Spleen (tissue), 13 donors: ENCODE measurements at regions of chr16 and their contacts with region 1.

Region 1: GRCh38 chr16:55465077-55465896 is 13.7 kb upstream of the MMP2 start:
- DNase-seq: peak; percentile 93
- H3K4me3 ChIP-seq: no peak overlapping the region
- H3K27ac ChIP-seq: no peak overlapping the region
- H3K4me1 ChIP-seq: peaks cover 0 to 7% (median 3%) of the 10 kb centered on the region in 6 donors
- H3K27me3 ChIP-seq: peaks cover 0 to 4% (median 0%) of the 10 kb centered on the region in 7 donors
- CTCF ChIP-seq: peak; percentile 97 to 100 (median 100)
- POLR2A ChIP-seq: no peak

Region 2: DNA sequence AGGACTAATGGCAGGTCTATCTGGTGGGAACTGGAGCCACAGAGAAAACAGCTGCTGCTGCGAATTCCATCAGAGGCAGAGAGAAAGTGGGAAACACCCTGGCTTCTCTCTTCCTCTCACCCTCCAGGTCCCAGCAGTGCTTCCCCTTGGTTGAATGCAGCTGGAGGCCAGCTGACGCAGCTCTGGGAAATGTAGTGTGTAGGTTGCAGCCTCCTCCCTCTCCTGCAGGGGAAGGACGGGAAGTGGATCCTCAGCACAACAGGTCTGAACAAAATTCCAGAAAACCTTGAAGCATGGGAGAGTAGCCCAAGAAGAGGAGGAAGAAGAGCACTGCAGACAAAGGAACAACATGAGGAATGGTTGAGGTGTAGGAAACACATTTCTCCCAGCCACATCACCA is 54.1 kb before region 1 on chr16:
- intact Hi-C with region 1: no loop called
- DNase-seq: no peak
- H3K4me3 ChIP-seq: no peak overlapping the region
- H3K27ac ChIP-seq: no peak overlapping the region
- H3K4me1 ChIP-seq: no peaks in the 10 kb centered on the region
- H3K27me3 ChIP-seq: no peaks in the 10 kb centered on the region
- CTCF ChIP-seq: no peak
- POLR2A ChIP-seq: no peak

Region 3: DNA sequence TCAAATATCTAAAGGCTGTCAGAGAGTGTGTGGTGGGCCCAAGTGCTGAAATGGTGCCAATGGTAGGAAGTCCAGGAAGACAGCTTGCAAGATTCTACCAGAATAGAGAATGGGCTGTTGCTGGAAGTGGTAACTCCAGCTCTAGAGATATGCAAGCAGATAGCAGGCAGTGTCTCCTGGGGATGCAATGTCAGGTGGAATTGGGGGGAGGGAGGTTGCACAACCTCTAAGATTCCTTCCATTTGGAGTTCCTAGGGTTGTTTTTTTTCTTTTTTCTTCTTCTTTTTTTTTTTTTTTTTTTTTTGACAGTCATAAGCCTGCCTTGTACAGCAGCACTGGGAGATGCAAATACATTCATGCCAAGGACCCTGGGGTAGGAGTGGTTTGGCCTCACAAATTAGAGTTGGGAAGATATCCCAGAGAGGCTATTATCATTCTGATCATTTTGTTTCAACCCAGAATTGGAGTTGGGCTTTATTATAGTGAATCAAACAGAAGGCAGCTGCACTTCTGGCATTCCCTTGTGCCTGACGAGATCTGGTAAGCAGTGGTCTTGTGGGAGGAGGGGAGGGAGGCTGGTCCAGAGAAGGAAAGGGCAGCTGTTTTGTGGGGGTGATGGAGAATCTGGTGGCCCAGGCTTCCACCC is 241.6 kb after region 1 on chr16:
- intact Hi-C with region 1: loop called (anchors 5 kb)
- DNase-seq: no peak
- H3K4me3 ChIP-seq: no peak overlapping the region
- H3K27ac ChIP-seq: no peak overlapping the region
- H3K4me1 ChIP-seq: no peaks in the 10 kb centered on the region
- H3K27me3 ChIP-seq: peaks cover 0 to 51% (median 3%) of the 10 kb centered on the region in 7 donors
- CTCF ChIP-seq: no peak
- POLR2A ChIP-seq: no peak

Region 4: DNA sequence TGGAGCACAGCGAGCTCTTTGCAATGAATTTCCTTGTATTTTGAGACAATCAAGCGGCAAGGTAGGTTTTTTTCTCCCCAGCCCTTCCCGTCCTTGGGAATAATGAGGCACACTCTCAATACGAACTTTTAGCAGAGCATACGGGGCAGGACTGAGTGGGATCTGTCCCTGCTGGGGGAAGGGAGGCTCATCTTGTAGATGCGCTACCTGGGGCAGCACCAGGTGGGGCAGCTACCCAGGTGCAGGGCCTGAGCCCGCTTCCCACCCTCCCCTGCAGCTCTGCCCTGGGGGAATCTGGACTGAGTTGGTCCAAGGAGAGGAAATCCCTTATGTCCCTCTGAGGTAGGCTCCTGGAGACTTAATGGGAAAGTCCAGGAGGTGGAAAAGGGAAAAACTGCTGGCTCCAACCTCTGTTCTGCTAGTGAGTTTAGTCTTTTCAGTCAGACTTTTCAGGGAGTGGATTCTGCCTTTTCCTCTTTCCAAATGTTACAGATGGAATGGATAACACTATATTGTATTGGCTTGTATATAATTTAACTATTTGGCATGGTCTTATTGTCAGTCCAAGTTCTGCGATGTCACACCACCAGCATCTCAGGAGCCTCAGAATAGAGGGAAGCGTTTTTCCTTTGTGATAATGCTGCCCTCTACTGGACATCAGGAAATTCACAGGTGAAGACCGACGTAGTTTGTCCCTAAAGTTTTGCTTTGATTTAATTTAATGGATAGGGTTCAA is 377.2 kb after region 1 on chr16:
- intact Hi-C with region 1: loop called (anchors 5 kb)
- DNase-seq: no peak
- H3K4me3 ChIP-seq: no peak overlapping the region
- H3K27ac ChIP-seq: no peak overlapping the region
- H3K4me1 ChIP-seq: peaks cover 0 to 7% (median 0%) of the 10 kb centered on the region in 6 donors
- H3K27me3 ChIP-seq: peaks cover 0 to 31% (median 0%) of the 10 kb centered on the region in 7 donors
- CTCF ChIP-seq: peak; percentile 58 to 86 (median 79)
- POLR2A ChIP-seq: no peak

Region 5: DNA sequence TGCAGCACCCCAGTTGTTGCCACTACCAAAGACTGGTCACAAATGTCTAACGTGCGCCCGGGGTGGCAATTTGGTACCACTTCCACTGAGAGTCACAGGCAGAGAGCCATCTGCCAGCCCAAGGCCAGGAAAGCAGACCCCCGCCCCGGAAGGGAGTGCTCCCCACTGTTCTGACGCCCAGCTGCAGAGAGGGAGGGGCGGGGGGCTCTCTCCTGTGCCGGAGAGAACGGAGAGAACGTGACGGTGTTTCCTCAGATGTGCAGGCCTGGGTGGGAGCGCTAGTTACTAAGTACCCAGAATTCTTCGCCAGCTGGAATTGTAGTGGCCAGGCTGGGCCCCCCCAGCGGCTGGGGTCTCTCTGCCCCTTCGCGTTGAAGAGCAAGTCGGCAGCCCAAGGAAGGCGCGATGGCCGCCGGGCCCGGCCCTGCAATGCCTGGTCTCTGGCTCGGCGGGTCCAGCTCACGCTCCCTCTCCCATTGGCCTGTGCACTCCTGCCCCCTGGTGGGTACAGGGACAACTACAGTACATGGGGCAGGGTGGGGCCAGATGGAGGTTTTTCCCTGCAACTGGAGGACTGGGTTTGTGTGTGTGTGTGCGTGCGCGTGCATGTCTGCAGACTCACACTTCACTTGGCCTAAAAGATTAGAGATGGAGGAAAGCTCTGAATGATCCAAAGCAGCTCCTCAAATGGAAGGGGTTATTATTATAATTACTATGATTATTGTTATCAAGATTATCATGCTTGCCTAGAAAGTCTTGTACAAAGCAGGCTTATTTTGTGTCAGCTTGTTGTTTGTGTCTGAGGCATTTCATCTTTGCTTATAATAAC is 852.9 kb after region 1 on chr16:
- intact Hi-C with region 1: loop called (anchors 10 kb)
- DNase-seq: peak; percentile 93
- H3K4me3 ChIP-seq: peak overlapping the region in 3 of 8 donors; percentile 12 to 54 (median 27)
- H3K27ac ChIP-seq: peak overlapping the region in 1 of 8 donors; percentile 10
- H3K4me1 ChIP-seq: peaks cover 0 to 11% (median 7%) of the 10 kb centered on the region in 6 donors
- H3K27me3 ChIP-seq: peaks cover 0 to 7% (median 0%) of the 10 kb centered on the region in 7 donors
- CTCF ChIP-seq: peak; percentile 87 to 98 (median 95)
- POLR2A ChIP-seq: no peak

Region 6: DNA sequence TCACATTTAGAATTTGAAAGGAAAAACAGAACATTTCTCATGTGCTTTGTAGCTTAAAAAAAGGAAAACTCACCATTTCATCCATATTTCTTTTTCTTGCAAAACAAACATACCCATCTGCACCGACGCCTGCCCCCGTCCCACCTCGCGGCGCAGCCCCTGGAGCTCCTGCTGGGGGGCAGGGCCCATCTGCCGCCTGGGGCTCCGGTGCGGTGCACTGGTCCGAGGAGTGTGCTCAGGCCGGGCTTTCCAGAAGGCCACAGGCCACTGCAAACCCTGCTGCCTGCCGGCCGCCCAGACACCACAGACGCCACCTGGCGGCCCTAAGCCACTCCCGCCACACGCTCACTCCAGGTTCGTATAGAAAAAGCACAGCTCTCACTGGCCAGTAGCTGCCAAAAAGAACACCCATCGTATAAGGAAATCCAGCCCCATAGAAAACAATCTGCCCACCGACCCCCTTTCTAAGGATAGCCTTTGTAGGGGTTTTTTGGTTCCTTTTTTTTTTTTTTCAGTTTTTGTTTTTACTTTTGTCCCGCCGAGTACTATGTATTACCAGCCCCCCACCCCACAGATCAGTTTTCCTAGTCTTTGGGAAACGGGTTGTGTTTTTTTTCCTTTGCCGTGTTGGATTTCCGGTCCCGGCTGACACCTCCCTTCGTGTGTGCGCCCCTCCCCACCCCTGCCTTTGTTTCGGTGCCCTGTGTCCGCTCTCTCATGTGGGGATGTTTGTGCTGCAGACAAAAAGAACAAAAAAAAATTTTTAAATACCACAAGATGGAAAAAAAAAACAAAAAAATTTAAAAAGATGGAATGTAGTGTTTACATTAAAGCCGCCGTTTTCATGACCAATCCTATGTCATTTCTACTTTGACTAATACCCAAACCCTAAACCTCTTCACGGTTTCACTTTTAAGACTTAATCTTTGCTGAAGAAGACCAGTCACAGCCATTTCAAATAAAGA is 891.3 kb after region 1 on chr16:
- intact Hi-C with region 1: loop called (anchors 10 kb)
- DNase-seq: peak; percentile 94
- H3K4me3 ChIP-seq: peak overlapping the region; percentile 6 to 58 (median 34)
- H3K27ac ChIP-seq: peak overlapping the region in 6 of 8 donors; percentile 39 to 70 (median 54)
- H3K4me1 ChIP-seq: peaks cover 0 to 30% (median 15%) of the 10 kb centered on the region in 6 donors
- H3K27me3 ChIP-seq: no peaks in the 10 kb centered on the region
- CTCF ChIP-seq: peak; percentile 59 to 89 (median 82)
- POLR2A ChIP-seq: no peak